Activated CD4-positive, alpha-beta T cell treated with anti-CD3 and anti-CD28 coated beads, Interleukin-2, amount 10 ng/mL, durations not matched to agents 7 days and 5 days (primary cell): ENCODE measurements at regions of chr1 and their contacts with region 1.

Region 1: GRCh38 chr1:145927063-145927886 is at the start of gene RBM8A:
- DNase-seq: peak; percentile 98
- H3K4me3 Mint-ChIP-seq: no peak within 1 kb of the TSS
- H3K27ac Mint-ChIP-seq: no peak within 1 kb of the TSS
- H3K4me1 Mint-ChIP-seq: peaks cover 29% of the 10 kb centered on the region
- H3K27me3 Mint-ChIP-seq: no peaks in the 10 kb centered on the region
- total RNA-seq, gene RBM8A: 175 to 188 TPM

Region 2: DNA sequence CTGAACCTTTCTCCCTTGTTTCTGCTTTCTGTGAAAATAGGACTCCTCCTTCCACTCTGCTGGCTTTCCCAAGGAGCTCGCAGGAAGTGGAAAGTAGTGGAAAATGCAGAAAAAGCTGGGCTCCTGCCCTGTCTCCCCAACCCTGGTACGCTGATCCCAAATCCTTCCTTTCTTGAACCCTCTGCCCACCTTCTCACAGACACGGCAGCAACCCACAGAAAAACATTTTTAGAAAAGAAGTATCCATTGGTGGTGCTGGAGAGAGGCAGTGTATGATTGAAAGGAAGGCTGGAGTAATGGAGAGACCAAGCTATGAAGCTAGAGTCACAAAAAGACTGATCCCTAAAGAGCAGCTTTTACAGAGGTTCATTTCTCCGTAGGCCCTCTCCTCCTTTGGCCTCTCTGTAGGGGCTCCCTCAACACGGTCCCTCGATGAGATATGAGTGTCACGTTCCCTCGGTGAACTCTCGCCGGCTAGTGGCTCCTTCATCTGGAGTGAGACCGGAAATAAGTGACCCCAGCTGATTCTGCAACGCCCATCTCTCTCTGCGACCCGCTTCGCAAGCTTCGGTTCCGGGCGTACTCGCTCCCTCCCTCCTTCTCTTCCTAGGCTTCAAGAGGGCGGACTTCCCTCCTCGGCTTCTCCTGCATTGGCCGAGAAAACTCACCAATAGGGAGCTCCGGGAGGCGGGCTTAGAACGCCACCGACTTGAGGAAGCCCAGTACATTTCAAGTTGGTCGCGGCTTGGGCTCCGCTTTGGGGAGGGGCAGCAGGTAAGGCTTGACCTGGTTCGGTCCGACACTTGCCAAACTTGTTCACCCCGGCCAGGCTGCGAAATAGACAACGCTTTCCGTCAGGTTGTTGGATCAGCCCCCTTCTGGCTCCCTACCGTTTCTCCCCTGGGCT is 37.0 kb after region 1 on chr1 and contains the starts of genes ANKRD34A and POLR3GL:
- CTCF ChIA-PET with region 1: interaction called, 13 read pairs
- POLR2A ChIA-PET with region 1: interaction called, 6 read pairs
- DNase-seq: peak; percentile 97
- H3K4me3 Mint-ChIP-seq: peak within 1 kb of the TSS; percentile 95
- H3K27ac Mint-ChIP-seq: peak within 1 kb of the TSS; percentile 89
- H3K4me1 Mint-ChIP-seq: peaks cover 54% of the 10 kb centered on the region
- H3K27me3 Mint-ChIP-seq: peaks cover 4% of the 10 kb centered on the region
- total RNA-seq, gene ANKRD34A: 2.0 to 2.2 TPM
- total RNA-seq, gene POLR3GL: 27.3 to 29.2 TPM